ENCODE measurements at regions of chr7 and their contacts with region 1.

Region 1: DNA sequence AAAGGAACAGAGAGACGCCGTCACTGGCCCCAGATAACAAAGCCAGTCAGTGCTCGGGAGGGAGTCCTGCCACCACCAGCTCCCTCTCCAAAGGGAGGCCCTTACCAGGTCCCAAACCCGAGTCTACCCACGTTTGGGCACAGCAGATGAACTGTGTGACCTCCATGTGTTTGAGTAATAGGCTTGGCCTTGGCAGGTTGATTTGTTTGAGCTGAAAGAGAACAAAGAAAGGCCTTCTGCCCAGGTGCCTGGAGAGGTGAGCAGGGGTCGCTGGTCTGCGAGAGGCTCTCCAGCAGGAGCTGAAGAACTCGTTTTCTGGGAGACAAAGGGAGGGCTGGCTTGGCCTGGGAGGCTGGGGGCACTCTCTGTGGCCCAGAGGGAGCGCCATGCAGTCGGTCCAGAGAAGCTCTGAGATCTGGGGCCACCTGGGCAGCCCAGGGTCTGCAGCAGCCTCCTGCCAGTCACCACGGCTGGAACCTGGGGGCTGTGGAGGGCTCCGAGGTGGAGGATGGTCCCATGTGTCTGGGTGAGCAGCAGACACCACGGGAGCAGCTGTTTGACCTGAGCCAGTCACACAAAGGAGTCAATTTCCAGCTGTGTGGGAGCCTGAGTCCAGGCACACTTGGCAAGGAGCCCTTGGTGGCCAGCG is 99.7 kb downstream of the PAXIP1 start:
- DNase-seq: no peak
- ATAC-seq: no peak
- H3K4me3 ChIP-seq: no peak overlapping the region
- H3K27ac ChIP-seq: no peak overlapping the region
- H3K4me1 ChIP-seq: no peaks in the 10 kb centered on the region
- CTCF ChIP-seq: no peak
- EP300 ChIP-seq: no peak
- POLR2A ChIP-seq: no peak
- RAD21 ChIP-seq: no peak

Region 2: DNA sequence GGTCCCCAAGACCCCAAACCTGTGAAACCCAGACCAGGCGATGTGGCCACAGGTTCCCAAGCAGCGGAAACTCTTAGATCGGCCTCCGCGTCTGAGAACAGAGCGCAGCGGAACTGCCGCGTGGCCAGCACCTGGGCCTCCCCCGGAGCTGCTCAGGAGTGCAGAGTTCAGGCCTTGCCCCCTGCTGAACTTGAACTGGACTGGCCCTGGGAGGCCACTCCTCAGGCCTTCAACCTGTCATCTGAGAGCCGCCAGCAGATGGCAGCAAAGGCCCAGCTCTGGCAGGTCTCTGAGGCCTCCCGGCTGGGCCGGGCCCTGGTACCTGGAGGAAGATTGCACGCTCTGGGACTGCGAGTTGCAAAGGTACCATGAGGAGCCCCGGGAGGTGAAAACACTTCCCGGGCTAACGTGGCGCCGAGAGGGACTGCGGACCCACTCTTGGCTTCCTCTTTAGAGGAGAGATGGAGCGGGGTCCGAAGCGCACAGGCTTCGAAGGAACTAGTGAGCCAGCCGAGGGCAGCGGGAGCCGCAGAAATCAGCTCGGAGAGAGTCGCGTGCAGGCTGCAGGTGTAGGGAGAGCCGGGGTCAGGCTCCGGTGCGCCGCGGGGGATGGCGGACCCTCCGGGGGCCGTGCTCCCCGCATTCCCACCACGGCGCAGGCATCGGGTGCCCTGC is 10.6 kb after region 1 on chr7:
- CTCF ChIA-PET with region 1: interaction called, 28 read pairs
- POLR2A ChIA-PET with region 1: interaction called, 6 read pairs
- DNase-seq: peak; percentile 64 to 69
- ATAC-seq: peak; percentile 93 to 99
- H3K4me3 ChIP-seq: no peak overlapping the region
- H3K27ac ChIP-seq: no peak overlapping the region
- H3K4me1 ChIP-seq: no peaks in the 10 kb centered on the region
- CTCF ChIP-seq: peak; percentile 76
- EP300 ChIP-seq: no peak
- POLR2A ChIP-seq: no peak
- RAD21 ChIP-seq: peak; percentile 81 to 83

Region 3: DNA sequence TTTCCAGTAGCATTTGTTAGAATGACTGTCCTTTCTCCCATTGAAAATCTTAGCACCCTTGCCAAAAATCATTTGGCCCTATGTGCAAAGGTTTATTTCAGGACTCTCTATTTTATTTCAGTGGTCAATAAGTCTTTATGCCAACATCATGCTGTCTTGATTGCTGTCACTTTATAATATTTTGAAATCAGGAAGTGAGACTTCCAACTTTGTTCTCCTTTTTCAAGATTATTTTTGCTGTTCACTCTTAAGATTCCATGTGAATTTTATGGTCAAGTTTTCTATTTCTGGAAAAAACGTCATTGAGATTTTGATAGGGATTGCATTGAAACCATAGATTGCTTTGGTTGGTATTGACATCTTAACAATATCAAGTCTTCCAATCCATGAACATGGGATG is 34.6 kb after region 1 on chr7:
- CTCF ChIA-PET with region 1: no interaction called
- POLR2A ChIA-PET with region 1: no interaction called
- DNase-seq: no peak
- ATAC-seq: no peak
- H3K4me3 ChIP-seq: no peak overlapping the region
- H3K27ac ChIP-seq: no peak overlapping the region
- H3K4me1 ChIP-seq: no peaks in the 10 kb centered on the region
- CTCF ChIP-seq: no peak
- EP300 ChIP-seq: no peak
- POLR2A ChIP-seq: no peak
- RAD21 ChIP-seq: no peak